Sigmoid colon (tissue), 7 donors: ENCODE measurements at regions of chr6 and their contacts with region 1.

Region 1: GRCh38 chr6:29016559-29017427 is 11.7 kb upstream of the ZNF311 start:
- DNase-seq: peak; percentile 86
- H3K4me3 ChIP-seq: peak overlapping the region; percentile 41 to 62 (median 50)
- H3K27ac ChIP-seq: peak overlapping the region; percentile 19 to 61 (median 44)
- H3K4me1 ChIP-seq: peaks cover 0 to 24% (median 11%) of the 10 kb centered on the region in 4 donors
- H3K27me3 ChIP-seq: peaks cover 9 to 22% (median 17%) of the 10 kb centered on the region in 3 donors
- CTCF ChIP-seq: peak; percentile 70 to 80 (median 74)
- EP300 ChIP-seq: no peak
- POLR2A ChIP-seq: no peak

Region 2: DNA sequence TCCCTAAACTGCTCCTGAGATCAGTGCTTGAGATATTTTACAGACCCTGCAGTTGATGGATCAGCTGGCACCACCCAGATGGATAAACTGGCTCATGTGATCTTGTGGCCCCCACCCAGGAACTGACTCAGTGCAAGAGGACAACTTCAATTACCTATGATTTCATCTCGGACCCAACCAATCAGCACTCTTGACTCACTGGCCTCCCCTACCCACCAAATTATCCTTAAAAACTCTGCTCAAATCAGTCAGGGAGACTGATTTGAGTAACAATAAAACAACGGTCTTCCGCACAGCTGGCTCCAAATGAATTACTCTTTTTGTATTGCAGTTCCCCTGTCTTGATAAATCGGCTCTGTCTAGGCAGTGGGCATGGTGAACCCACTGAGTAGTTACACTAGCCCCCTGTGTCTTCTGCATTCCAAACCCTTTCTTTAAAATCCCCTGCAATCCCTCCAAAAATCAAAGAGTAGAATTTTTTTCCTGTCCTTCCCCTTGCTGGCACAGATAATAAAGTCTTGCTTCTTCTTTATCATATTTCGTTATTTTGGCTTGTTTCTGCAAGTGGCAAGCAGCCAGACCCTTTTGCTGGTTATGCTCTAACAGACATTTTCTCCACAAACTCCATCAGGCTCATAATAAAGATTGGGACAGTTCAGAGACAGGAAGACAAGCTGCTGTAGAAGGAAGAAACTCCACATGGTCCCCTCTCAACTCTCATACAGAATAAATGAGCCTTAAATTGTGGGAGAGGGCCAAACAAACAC is 1011.5 kb before region 1 on chr6:
- intact Hi-C with region 1: no loop called
- DNase-seq: no peak
- H3K4me3 ChIP-seq: no peak overlapping the region
- H3K27ac ChIP-seq: no peak overlapping the region
- H3K4me1 ChIP-seq: no peaks in the 10 kb centered on the region
- H3K27me3 ChIP-seq: no peaks in the 10 kb centered on the region
- CTCF ChIP-seq: no peak
- EP300 ChIP-seq: no peak
- POLR2A ChIP-seq: no peak

Region 3: GRCh38 chr6:28683944-28684538 is 332.8 kb before region 1 on chr6:
- intact Hi-C with region 1: loop called (anchors 1 kb)
- DNase-seq: no peak
- H3K4me3 ChIP-seq: no peak overlapping the region
- H3K27ac ChIP-seq: no peak overlapping the region
- H3K4me1 ChIP-seq: no peaks in the 10 kb centered on the region
- H3K27me3 ChIP-seq: peaks cover 0 to 75% (median 18%) of the 10 kb centered on the region in 3 donors
- CTCF ChIP-seq: peak in 2 of 4 experiments; percentile 17 to 25
- EP300 ChIP-seq: no peak
- POLR2A ChIP-seq: no peak

Region 4: DNA sequence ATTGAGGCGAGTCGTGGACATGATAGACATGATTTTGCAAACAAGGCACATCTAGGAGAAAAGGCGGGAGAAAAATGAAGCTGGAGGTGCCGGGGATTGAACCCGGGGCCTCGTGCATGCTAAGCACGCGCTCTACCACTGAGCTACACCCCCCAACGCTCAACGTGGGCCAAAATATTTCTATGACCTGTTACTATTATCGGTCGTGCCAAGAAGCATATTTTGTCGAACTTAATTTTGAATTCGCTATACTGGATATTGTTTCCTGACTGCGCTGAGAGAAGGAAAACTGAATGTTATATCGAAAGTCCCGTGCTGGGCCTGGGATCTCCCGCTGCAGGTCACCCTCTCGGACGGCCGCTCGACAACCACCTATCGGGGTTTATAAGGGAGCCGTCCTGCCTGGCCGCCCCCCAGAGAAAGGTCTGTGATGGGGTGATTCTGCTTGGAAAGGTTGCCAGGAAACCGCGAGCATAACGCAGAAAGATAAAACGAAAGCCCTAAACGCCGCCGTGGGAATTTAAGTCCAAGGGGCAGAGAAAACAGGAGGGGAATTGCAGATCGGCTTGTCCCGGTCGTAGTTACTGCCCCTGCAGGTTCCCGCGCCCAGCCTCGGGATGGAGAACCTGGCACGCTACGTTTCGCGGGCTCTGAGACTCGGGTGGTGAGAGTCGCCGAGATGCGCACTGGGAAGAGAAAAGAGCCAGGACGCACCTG is 153.0 kb before region 1 on chr6:
- intact Hi-C with region 1: loop called (anchors 10 kb)
- DNase-seq: peak; percentile 86
- H3K4me3 ChIP-seq: peak overlapping the region; percentile 62 to 73 (median 67)
- H3K27ac ChIP-seq: peak overlapping the region; percentile 71 to 81 (median 79)
- H3K4me1 ChIP-seq: peaks cover 0 to 21% (median 10%) of the 10 kb centered on the region in 4 donors
- H3K27me3 ChIP-seq: no peaks in the 10 kb centered on the region
- CTCF ChIP-seq: no peak
- EP300 ChIP-seq: no peak
- POLR2A ChIP-seq: no peak

Region 5: DNA sequence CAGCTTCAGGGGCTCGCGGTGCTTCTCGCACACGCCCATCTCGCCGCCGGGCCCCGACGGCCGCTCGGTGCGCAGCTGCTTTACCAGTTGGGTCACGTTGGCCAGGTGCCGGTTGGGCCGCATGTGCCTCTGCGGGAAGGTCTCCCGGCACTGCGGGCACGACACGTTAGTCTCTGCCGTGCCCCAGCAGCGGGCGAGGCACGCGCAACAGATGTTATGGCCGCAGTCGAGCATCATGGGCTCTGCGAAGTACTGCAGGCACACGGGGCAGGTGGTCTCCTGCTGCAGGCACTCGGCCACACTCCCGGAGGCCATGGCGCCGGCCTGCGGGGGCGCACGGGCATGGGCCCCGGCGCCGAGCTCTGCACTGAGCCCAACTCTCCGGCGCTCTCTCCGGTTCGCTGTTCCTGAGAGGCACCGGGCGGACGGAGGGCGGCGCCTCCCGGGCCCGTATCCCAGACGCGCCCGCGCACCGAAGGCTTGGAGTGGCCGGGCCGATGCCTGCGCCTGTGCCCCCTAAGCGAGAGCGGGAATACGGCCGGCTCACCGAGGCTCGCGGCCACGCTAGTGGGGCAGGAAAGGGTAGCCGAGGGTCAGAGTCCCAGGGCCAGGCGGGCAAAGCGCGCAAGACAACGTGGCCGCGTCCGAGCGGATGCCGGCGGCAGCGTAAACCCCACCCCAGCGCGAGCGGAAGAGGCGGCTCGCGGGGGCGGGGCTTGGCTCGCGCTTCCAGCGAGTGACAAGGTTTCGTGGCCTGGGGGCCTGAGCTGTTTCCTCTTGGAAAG is 93.3 kb before region 1 on chr6 and contains the start of gene TRIM27:
- intact Hi-C with region 1: loop called (anchors 5 kb)
- DNase-seq: peak; percentile 94
- H3K4me3 ChIP-seq: peak within 1 kb of the TSS; percentile 67 to 83 (median 80)
- H3K27ac ChIP-seq: peak within 1 kb of the TSS; percentile 92 to 97 (median 94)
- H3K4me1 ChIP-seq: peaks cover 0 to 37% (median 19%) of the 10 kb centered on the region in 4 donors
- H3K27me3 ChIP-seq: no peaks in the 10 kb centered on the region
- CTCF ChIP-seq: no peak
- EP300 ChIP-seq: no peak
- POLR2A ChIP-seq: peak; percentile 80 to 81
- total RNA-seq, gene TRIM27: 31.9 to 40.0 (median 36.1) TPM